AG04450 (cell line): ENCODE measurements at regions of chr2 and their contacts with region 1.

Region 1: GRCh38 chr2:31324000-31324633 is 90.2 kb downstream of the EHD3 start:
- DNase-seq: no peak
- H3K4me3 ChIP-seq: no peak overlapping the region
- H3K27ac ChIP-seq: no peak overlapping the region
- H3K27me3 ChIP-seq: no peaks in the 10 kb centered on the region
- CTCF ChIP-seq: no peak

Region 2: DNA sequence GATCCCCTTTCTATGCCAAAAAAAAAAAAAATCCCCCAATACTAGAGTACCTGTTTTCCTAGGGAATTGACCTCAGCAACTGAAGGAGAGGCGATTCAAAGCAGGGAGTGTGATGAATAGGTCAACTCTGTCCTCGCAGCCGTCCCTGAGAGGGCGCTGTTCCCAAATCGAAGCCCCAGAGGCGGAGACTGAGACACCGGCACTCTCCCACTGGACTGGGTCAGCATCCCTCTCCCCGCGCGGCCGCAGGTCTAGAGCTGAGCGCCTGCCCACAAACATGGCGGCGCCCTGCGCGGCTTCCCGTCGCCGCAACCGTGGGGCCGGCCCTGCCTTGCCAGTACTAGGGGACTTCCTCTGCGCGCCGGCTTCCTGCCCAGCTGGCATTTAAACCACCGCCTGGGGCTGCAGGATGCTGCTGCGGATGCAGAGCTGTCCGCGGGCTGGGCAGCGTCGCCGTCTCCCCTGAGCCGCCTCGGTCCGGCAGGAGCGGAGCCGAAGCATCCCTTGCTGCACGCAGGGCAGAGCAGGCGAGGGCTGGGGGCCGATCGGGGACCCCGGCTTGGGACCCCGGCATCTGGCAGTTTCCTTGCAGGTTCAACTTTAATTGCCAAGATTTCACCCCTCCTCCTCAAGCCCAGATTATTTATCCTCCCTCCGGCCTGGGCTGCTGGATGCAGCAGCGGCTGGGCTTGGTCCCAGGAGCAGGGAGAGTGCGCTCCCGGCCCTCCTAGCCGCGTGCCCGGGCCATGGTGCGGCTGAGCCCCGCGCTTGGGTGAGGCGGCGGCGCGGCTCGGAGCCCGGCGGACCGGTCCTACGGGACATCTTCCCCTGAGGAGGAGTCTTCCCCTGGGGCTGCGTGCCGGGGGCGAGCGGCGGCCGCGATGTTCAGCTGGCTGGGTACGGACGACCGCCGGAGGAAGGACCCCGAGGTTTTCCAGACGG is 90.1 kb before region 1 on chr2 and contains the start of gene EHD3:
- CTCF ChIA-PET with region 1: interaction called, 16 read pairs
- POLR2A ChIA-PET with region 1: interaction called, 9 read pairs
- DNase-seq: peak; percentile 77
- H3K4me3 ChIP-seq: peak within 1 kb of the TSS; percentile 83
- H3K27ac ChIP-seq: peak within 1 kb of the TSS; percentile 52
- H3K27me3 ChIP-seq: peaks cover 11% of the 10 kb centered on the region
- CTCF ChIP-seq: peak; percentile 76
- polyA plus RNA-seq, gene EHD3: 39.8 and 48.6 TPM in 2 replicates

Region 3: GRCh38 chr2:31312898-31313297 is 11.2 kb before region 1 on chr2:
- CTCF ChIA-PET with region 1: no interaction called
- POLR2A ChIA-PET with region 1: no interaction called
- DNase-seq: peak; percentile 30
- H3K4me3 ChIP-seq: no peak overlapping the region
- H3K27ac ChIP-seq: no peak overlapping the region
- H3K27me3 ChIP-seq: peaks cover 6% of the 10 kb centered on the region
- CTCF ChIP-seq: no peak

Region 4: GRCh38 chr2:31428001-31428418 is 103.9 kb after region 1 on chr2:
- CTCF ChIA-PET with region 1: no interaction called
- POLR2A ChIA-PET with region 1: no interaction called
- DNase-seq: no peak
- H3K4me3 ChIP-seq: no peak overlapping the region
- H3K27ac ChIP-seq: no peak overlapping the region
- H3K27me3 ChIP-seq: no peaks in the 10 kb centered on the region
- CTCF ChIP-seq: peak; percentile 20; the same call in 1 of the 2 replicates